Activated CD8-positive, alpha-beta T cell treated with anti-CD3 and anti-CD28 coated beads for 36 hours (primary cell): ENCODE measurements at regions of chrX and their contacts with region 1.

Region 1: DNA sequence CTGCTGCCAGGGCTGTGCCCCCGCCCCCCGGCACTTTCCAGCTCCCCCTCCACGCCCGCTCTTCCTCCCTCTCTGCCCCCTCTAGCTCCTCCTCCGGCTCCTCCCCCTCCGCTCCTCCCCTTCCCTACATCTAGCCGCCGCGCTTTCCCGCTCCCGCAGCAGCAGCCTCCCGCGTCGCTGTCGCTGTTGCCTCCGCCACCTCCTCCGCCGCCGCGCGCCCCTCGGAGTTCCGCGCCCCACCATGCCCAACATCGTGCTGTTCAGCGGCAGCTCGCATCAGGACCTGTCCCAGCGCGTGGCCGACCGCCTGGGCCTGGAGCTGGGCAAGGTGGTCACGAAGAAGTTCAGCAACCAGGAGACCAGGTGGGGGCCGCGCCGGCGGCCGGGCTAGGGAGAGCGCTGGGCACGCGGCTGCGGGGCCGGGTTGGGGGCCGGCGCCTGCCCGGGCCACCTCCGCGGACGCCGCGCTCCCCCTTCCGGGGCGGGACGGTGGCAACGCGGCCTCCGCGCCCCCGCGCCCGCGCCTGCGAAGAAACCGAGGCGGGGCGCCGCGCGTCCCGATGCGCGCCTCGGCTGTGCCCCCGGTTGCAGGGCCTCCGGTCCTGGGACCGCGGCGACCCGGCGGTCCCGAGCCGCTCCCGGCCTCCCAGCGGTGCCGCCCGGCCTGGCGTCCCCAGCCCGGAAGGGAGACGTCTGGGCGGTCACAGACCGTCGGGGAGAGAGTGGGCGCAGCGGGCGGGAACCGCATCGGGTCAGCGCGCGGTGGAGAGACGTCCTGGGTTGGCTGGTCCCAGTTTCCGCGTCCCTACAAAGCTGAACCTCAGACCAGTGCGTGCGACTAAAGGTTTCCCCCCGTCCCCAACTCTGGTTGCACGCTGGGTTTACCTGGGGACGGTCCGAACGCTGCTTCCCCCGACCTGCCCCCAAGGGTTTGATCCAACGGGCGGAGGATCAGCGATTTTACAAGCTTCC is at the start of gene PRPS2:
- DNase-seq: peak; percentile 78
- ATAC-seq: peak; percentile 91
- H3K4me3 Mint-ChIP-seq: peak within 1 kb of the TSS; percentile 82
- H3K27ac Mint-ChIP-seq: peak within 1 kb of the TSS; percentile 86
- H3K4me1 Mint-ChIP-seq: peaks cover 27% of the 10 kb centered on the region
- H3K27me3 Mint-ChIP-seq: no peaks in the 10 kb centered on the region
- CTCF ChIP-seq: no peak
- total RNA-seq, gene PRPS2: 110 to 114 TPM

Region 2: DNA sequence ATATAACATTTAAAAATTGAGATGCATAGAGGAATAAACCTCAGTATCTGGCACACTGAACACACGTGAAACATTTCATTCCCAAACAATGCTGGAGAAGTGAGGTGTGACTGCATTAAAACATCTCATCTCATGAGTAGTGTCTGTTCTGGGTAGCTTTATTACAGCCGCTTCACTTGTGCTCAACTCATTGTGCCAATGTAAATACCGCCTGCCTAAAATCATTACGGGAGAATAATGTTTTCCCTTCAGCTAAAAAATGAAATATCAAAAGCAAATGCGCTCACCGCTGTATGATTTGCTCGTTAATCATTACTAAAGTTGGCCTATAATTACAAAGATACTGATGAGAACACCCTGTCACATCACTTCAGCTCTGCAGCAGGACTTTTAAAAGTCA is 110.5 kb before region 1 on chrX:
- CTCF ChIA-PET with region 1: no interaction called
- POLR2A ChIA-PET with region 1: no interaction called
- intact Hi-C with region 1: no loop called
- DNase-seq: no peak
- ATAC-seq: no peak
- H3K4me3 Mint-ChIP-seq: no peak overlapping the region
- H3K27ac Mint-ChIP-seq: no peak overlapping the region
- H3K4me1 Mint-ChIP-seq: no peaks in the 10 kb centered on the region
- H3K27me3 Mint-ChIP-seq: peaks cover 2% of the 10 kb centered on the region
- CTCF ChIP-seq: no peak

Region 3: GRCh38 chrX:12804655-12805054 is 13.1 kb after region 1 on chrX:
- CTCF ChIA-PET with region 1: interaction called, 4 read pairs
- POLR2A ChIA-PET with region 1: interaction called, 17 read pairs
- intact Hi-C with region 1: no loop called
- DNase-seq: no peak
- ATAC-seq: no peak
- H3K4me3 Mint-ChIP-seq: no peak overlapping the region
- H3K27ac Mint-ChIP-seq: no peak overlapping the region
- H3K4me1 Mint-ChIP-seq: peaks cover 17% of the 10 kb centered on the region
- H3K27me3 Mint-ChIP-seq: no peaks in the 10 kb centered on the region
- CTCF ChIP-seq: no peak

Region 4: GRCh38 chrX:12825801-12826200 is 34.3 kb after region 1 on chrX:
- CTCF ChIA-PET with region 1: no interaction called
- POLR2A ChIA-PET with region 1: no interaction called
- intact Hi-C with region 1: no loop called
- DNase-seq: no peak
- ATAC-seq: no peak
- H3K4me3 Mint-ChIP-seq: no peak overlapping the region
- H3K27ac Mint-ChIP-seq: no peak overlapping the region
- H3K4me1 Mint-ChIP-seq: no peaks in the 10 kb centered on the region
- H3K27me3 Mint-ChIP-seq: no peaks in the 10 kb centered on the region
- CTCF ChIP-seq: no peak

Region 5: DNA sequence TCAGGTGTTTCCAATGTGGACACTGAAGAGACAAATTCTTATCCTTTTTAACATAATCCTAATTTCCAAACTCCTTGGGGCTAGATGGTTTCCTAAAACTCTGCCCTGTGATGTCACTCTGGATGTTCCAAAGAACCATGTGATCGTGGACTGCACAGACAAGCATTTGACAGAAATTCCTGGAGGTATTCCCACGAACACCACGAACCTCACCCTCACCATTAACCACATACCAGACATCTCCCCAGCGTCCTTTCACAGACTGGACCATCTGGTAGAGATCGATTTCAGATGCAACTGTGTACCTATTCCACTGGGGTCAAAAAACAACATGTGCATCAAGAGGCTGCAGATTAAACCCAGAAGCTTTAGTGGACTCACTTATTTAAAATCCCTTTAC is 94.0 kb after region 1 on chrX:
- CTCF ChIA-PET with region 1: no interaction called
- POLR2A ChIA-PET with region 1: no interaction called
- intact Hi-C with region 1: no loop called
- DNase-seq: no peak
- ATAC-seq: no peak
- H3K4me3 Mint-ChIP-seq: no peak overlapping the region
- H3K27ac Mint-ChIP-seq: no peak overlapping the region
- H3K4me1 Mint-ChIP-seq: peaks cover 12% of the 10 kb centered on the region
- H3K27me3 Mint-ChIP-seq: no peaks in the 10 kb centered on the region
- CTCF ChIP-seq: no peak

Region 6: DNA sequence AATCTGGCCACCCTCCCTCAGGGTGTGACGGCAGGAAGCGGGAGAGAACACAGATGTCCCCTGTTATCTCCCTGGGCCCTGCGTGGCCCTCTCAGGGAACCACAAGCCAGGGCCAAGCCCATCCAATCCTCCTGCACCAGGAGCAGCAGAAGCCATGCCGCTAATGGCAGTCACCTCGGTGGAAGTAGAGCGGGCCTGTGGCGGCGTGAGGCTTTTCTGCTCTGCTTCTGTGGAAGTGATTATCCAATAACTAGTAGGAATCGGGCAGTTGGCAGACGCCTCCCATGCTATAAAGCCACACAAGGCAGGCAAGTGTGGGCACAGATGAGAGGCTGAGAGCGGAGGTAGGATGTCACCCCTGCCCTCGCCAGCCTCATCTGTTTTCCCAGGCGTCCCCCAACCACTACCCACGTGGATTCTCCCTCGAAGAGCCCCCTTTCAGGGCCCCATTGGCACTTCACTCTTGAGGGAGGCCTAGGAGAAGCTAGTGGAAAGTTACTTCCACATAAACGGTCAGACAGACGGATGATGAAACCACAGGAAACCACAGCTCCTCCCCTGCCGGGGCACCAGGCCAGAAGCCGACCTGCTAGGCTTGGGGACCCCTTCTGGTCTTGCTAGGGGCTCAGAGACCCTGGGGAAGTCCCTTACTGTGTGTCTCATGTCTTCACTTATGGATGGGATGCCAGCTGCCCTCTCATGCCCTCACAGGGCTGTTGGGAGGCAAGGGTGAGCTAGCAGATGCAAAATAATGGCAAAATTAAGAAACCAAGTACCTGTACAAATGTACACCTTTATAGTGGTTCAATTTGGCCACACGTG is 164.6 kb after region 1 on chrX:
- CTCF ChIA-PET with region 1: no interaction called
- POLR2A ChIA-PET with region 1: no interaction called
- intact Hi-C with region 1: no loop called
- DNase-seq: peak; percentile 83
- ATAC-seq: peak; percentile 45
- H3K4me3 Mint-ChIP-seq: peak overlapping the region; percentile 88
- H3K27ac Mint-ChIP-seq: peak overlapping the region; percentile 98
- H3K4me1 Mint-ChIP-seq: peaks cover 53% of the 10 kb centered on the region
- H3K27me3 Mint-ChIP-seq: no peaks in the 10 kb centered on the region
- CTCF ChIP-seq: no peak